Astrocyte of the cerebellum (primary cell): ENCODE measurements at regions of chr3 and their contacts with region 1.

Region 1: DNA sequence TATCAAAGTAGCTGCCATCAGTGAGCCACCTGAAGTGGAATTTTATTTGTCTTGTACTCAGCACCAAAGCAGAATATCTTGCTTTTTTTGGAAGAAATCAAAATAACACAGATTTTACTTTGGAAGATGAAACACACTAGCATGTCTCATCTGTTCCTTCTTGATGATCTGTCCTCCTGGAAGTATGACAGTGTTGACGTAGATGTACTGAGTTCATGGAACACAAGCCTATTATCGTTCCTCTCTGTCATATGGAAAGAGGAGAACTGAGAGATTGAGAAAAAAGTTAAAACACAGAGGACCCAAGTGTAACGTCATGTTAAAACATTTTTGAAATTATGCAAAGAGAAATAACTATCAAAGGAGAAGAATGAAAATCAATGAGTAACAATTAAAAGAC is 340.2 kb downstream of the ROBO2 start:
- DNase-seq: no peak
- H3K4me3 ChIP-seq: no peak overlapping the region
- CTCF ChIP-seq: no peak

Region 2: DNA sequence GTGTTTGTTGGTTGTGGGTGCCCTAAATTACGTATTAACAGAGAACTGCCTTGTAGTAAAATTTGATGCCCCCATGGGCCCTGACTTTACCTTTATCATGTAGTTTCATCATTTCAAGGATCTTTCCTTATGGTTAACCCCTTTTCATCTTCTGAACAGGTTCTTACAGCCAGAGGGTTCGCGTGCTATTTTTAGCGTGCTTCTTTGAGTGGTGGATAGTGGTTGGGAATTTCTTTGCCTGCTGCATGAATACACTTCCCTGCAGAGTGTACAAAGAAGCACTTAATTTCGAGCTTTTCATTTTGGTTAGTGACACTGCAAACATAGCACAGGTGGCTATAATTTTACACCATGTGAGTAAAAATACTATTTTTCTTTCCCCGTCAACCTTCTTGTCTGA is 108.4 kb before region 1 on chr3:
- in situ Hi-C with region 1: no loop called
- DNase-seq: no peak
- H3K4me3 ChIP-seq: no peak overlapping the region
- CTCF ChIP-seq: no peak

Region 3: GRCh38 chr3:77354958-77355357 is 25.2 kb before region 1 on chr3:
- in situ Hi-C with region 1: loop called (anchors 5 kb)
- DNase-seq: no peak
- H3K4me3 ChIP-seq: no peak overlapping the region
- CTCF ChIP-seq: no peak

Region 4: DNA sequence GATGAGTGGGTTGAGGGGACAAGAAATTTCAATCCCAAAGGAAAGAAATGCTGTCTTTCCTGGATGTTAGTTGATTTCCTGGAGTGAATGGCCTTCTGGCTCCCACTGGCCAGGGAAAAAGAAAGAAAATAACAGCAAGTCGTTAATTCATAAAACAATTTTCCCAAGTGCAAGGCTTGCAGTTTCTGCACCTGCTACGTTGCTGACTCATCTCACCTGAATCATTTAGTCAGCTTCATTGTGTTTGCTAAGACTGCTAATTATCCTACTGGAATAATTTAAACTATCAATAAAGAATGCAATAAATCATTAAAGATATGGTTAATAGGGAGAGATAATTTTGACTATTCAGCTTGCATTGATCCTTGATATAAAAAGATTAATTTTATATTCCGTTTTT is 47.4 kb after region 1 on chr3:
- in situ Hi-C with region 1: no loop called
- DNase-seq: no peak
- H3K4me3 ChIP-seq: no peak overlapping the region
- CTCF ChIP-seq: no peak